Heart left ventricle (tissue), 16 donors: ENCODE measurements at regions of chr7 and their contacts with region 1.

Region 1: DNA sequence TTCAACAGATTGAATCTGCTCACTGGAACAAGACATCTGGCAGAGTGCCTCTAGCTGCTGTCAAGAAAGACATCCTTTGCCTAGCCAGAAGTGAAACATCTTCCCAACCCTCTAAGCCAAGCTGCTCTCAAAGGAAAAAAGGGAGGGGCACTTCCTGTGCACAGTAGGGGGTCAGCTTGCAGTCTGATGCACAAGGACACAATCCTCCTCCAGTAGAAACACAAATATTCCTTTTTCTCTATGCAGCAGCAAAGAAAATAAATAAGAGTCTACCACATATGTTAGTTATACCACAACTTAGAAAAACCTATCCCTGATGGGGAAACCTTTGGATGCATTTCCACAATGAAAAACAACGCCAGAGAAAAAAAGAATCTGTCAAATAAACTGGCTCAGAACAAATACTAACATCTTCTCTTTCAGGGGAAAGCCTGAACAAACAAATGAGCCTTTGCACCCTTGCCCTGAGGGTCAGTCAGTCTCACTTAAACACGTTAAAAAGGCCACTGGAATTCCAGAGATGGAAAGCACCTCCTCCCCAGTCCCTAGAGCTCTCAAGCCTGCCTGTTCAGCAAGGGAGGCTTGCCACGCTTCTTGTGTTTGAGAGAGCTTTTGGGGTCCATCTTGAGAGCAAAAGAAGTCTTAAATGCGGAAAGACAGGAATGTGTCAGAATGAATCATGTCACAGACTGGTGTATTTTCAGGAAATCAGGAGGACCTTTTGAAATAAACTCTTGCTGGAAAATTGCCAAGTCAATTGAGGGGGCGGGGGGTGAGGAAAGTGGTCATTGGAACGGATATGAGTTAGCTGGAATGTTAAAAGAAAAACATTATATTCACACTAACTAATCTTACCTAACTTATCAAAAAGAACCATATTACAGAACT is 7.5 kb downstream of the LAMB1 start:
- DNase-seq: peak in 4 of 5 donors; percentile 54 to 67 (median 59)
- ATAC-seq: peak; percentile 62 to 72 (median 70)
- H3K4me3 ChIP-seq: no peak overlapping the region
- H3K27ac ChIP-seq: peak overlapping the region; percentile 49 to 79 (median 63)
- H3K4me1 ChIP-seq: peaks cover 0 to 80% (median 44%) of the 10 kb centered on the region in 12 donors
- H3K27me3 ChIP-seq: no peaks in the 10 kb centered on the region
- CTCF ChIP-seq: no peak
- POLR2A ChIP-seq: no peak

Region 2: GRCh38 chr7:107758667-107759066 is 236.8 kb before region 1 on chr7:
- intact Hi-C with region 1: no loop called
- DNase-seq: no peak
- ATAC-seq: no peak
- H3K4me3 ChIP-seq: no peak overlapping the region
- H3K27ac ChIP-seq: no peak overlapping the region
- H3K4me1 ChIP-seq: no peaks in the 10 kb centered on the region
- H3K27me3 ChIP-seq: no peaks in the 10 kb centered on the region
- CTCF ChIP-seq: no peak
- POLR2A ChIP-seq: no peak

Region 3: GRCh38 chr7:107856806-107857540 is 138.5 kb before region 1 on chr7:
- intact Hi-C with region 1: no loop called
- DNase-seq: no peak
- ATAC-seq: no peak
- H3K4me3 ChIP-seq: no peak overlapping the region
- H3K27ac ChIP-seq: peak overlapping the region in 1 of 12 donors; percentile 39
- H3K4me1 ChIP-seq: peaks cover 0 to 18% (median 0%) of the 10 kb centered on the region in 12 donors
- H3K27me3 ChIP-seq: no peaks in the 10 kb centered on the region
- CTCF ChIP-seq: no peak
- POLR2A ChIP-seq: no peak

Region 4: DNA sequence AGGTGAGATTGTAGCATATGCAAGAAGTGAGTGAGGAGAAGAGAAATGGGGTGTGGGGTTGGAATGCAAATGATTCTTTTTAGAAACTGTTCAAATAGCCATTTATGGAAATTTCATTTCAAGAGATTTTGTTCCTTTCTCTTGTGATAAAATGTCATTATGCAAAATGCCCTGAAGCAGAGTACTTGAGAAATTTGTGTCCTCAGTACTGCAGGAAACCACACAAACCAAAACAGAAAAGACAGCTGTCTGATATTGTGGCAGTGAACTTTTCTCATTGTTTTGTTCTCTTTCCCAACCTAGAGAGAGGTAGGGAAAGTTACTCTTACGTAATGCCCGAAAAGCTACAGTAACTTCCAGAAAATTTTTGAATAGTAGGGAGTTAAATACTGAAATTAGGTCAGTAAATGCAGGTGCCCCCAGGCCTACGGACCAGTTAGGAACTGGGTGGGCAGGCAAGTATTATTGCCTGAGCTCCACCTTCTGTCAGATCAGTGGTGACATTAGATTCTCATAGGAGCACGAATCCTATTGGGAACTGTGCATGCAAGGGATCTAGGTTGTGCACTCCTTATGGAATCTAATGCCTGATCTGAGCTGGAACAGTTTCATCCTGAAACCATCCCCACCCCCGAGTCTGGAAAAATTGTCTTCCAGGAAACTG is 70.5 kb before region 1 on chr7:
- intact Hi-C with region 1: loop called in 1 of 10 experiments (anchors 10 kb)
- DNase-seq: no peak
- ATAC-seq: no peak
- H3K4me3 ChIP-seq: no peak overlapping the region
- H3K27ac ChIP-seq: peak overlapping the region in 5 of 12 donors; percentile 6 to 56 (median 17)
- H3K4me1 ChIP-seq: peaks cover 0 to 41% (median 8%) of the 10 kb centered on the region in 12 donors
- H3K27me3 ChIP-seq: no peaks in the 10 kb centered on the region
- CTCF ChIP-seq: no peak
- POLR2A ChIP-seq: no peak